ENCODE measurements at regions of chr9 and their contacts with region 1.

Region 1: GRCh38 chr9:84397151-84397728 is 56.7 kb upstream of the SLC28A3 start:
- DNase-seq: peak; percentile 47 to 82 (median 70)
- H3K4me3 ChIP-seq: peak overlapping the region in 3 of 59 donors; percentile 7 to 18 (median 11)
- H3K27ac ChIP-seq: peak overlapping the region in 2 of 59 donors; percentile 16 to 21
- H3K27me3 ChIP-seq: peaks cover 0 to 3% (median 0%) of the 10 kb centered on the region in 45 donors
- CTCF ChIP-seq: peak; percentile 78 to 99 (median 96)

Region 2: DNA sequence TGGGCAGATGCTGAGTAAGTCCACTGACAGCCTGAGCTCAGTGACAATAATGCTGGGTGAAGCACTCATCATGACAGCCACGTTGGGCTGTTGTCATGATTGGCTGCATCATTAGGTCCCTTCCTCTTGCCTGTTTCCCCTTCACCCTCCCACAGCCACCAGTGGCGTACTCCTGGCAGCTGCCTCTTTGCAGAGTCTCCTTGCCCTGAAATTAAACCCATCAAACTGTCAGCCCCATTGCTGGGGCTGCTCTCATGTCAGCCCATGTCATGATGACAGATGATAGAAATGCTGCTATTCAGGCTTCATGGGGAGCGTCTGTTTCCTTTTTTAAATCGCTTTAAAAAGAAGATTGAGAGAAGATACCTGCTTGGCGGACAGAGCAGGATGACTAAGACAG is 1017.1 kb after region 1 on chr9:
- intact Hi-C with region 1: loop called in 1 of 2 experiments (anchors 10 kb)
- DNase-seq: peak in 1 of 10 donors; percentile 48
- H3K4me3 ChIP-seq: no peak overlapping the region
- H3K27ac ChIP-seq: peak overlapping the region in 39 of 59 donors; percentile 5 to 76 (median 46)
- H3K27me3 ChIP-seq: no peaks in the 10 kb centered on the region
- CTCF ChIP-seq: no peak